Tibial artery (tissue), 4 donors: ENCODE measurements at regions of chr19 and their contacts with region 1.

Region 1: GRCh38 chr19:42311657-42312056 is 1.5 kb upstream of the TMEM145 start:
- DNase-seq: no peak
- H3K4me3 ChIP-seq: no peak overlapping the region
- H3K27ac ChIP-seq: no peak overlapping the region
- H3K4me1 ChIP-seq: peaks cover 0 to 17% (median 9%) of the 10 kb centered on the region in 4 donors
- H3K27me3 ChIP-seq: peaks cover 0 to 77% of the 10 kb centered on the region in 2 donors
- CTCF ChIP-seq: no peak

Region 2: GRCh38 chr19:41912899-41913537 is 398.6 kb before region 1 on chr19:
- intact Hi-C with region 1: loop called (anchors 2 kb)
- DNase-seq: no peak
- H3K4me3 ChIP-seq: no peak overlapping the region
- H3K27ac ChIP-seq: no peak overlapping the region
- H3K4me1 ChIP-seq: peaks cover 0 to 16% (median 7%) of the 10 kb centered on the region in 4 donors
- H3K27me3 ChIP-seq: peaks cover 0 to 68% of the 10 kb centered on the region in 2 donors
- CTCF ChIP-seq: no peak

Region 3: GRCh38 chr19:41967054-41967783 is 344.4 kb before region 1 on chr19:
- intact Hi-C with region 1: no loop called
- DNase-seq: no peak
- H3K4me3 ChIP-seq: no peak overlapping the region
- H3K27ac ChIP-seq: no peak overlapping the region
- H3K4me1 ChIP-seq: no peaks in the 10 kb centered on the region
- H3K27me3 ChIP-seq: peaks cover 0 to 46% of the 10 kb centered on the region in 2 donors
- CTCF ChIP-seq: no peak